ENCODE measurements at regions of chr6 and their contacts with region 1.

Region 1: DNA sequence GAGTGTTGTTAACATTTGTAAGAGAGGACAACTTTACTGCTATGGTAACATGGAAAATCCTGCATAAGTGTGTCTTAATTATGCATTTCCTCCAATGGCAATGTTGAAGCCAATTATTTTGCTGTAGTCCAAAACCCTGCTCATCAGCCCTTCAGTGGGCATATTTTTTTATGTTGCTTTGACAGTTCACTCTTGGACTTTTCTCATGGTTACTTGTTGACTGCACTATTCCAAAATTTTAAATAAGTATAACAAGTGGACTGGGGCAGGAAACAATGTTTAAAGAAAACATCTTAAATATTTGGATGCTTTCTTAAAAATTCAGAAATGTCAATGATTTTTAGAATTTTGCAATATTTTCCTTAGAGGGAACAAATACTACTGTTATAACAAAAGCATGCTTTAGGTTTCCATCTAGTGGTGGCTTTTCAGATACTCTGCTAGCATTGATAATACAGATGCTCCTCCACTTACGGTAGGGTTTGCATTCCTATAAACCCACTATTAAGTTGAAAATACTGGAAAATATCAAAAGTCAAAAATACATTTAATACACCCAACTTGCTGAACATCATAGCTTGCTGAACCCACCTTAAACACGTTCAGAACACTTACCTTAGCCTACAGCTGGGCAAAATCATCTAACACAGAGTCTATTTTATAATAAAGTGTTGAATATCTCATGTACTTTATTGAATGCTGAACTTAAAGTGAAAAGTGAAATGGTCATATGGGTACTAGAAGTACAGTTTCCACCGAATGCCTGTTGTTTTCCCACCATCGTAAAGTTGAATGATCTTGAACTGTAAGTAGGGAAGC is 86.4 kb downstream of the ADGRG6 start:
- DNase-seq: no peak
- H3K4me3 ChIP-seq: no peak overlapping the region
- H3K27me3 ChIP-seq: no peaks in the 10 kb centered on the region
- CTCF ChIP-seq: peak; percentile 71

Region 2: GRCh38 chr6:142155895-142156757 is 232.1 kb before region 1 on chr6:
- CTCF ChIA-PET with region 1: interaction called, 10 read pairs
- POLR2A ChIA-PET with region 1: no interaction called
- DNase-seq: no peak
- H3K4me3 ChIP-seq: no peak overlapping the region
- H3K27me3 ChIP-seq: no peaks in the 10 kb centered on the region
- CTCF ChIP-seq: peak; percentile 27

Region 3: DNA sequence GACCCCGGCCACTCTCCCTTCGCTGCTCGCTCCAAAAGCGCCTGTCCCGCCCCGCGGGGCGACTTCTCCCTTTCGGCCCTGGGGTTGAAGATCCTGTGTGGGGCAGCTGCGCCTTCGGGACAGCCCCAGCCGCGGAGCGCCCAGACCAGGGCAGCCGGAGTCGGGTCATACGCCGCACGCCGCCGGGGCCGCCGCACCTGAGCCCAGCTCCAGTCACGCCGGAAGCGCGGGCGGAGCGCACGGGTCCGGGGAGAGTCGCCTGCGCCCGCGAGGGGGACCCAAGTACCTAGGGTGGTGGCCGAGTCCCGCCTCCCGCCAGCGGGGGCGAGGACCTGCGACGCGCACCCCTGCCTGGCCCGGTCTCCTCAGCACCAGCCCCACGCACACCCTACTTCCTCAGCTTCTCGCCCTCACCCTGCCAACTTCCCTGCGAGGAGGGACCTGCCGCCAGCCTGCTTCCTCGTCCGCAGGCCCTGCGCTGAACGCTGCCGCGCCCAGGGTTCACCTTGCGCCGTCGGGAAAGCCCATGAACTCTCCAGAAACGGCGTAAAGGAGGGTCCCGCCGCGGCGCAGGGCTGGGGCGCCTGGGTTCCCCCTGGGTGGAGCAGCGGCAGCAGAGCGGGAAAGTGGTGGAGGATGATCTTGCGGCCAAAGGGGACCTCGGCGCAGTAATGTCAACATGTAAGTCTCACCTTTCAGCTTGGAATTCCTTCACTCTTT is 86.4 kb before region 1 on chr6 and contains the start of gene ADGRG6:
- CTCF ChIA-PET with region 1: interaction called, 10 read pairs
- POLR2A ChIA-PET with region 1: no interaction called
- DNase-seq: no peak
- H3K4me3 ChIP-seq: peak within 1 kb of the TSS; percentile 84
- H3K27me3 ChIP-seq: no peaks in the 10 kb centered on the region
- CTCF ChIP-seq: no peak
- polyA plus RNA-seq, gene ADGRG6: 25.4 and 32.9 TPM in 2 replicates